ENCODE measurements at regions of chr11 and their contacts with region 1.

Region 1: DNA sequence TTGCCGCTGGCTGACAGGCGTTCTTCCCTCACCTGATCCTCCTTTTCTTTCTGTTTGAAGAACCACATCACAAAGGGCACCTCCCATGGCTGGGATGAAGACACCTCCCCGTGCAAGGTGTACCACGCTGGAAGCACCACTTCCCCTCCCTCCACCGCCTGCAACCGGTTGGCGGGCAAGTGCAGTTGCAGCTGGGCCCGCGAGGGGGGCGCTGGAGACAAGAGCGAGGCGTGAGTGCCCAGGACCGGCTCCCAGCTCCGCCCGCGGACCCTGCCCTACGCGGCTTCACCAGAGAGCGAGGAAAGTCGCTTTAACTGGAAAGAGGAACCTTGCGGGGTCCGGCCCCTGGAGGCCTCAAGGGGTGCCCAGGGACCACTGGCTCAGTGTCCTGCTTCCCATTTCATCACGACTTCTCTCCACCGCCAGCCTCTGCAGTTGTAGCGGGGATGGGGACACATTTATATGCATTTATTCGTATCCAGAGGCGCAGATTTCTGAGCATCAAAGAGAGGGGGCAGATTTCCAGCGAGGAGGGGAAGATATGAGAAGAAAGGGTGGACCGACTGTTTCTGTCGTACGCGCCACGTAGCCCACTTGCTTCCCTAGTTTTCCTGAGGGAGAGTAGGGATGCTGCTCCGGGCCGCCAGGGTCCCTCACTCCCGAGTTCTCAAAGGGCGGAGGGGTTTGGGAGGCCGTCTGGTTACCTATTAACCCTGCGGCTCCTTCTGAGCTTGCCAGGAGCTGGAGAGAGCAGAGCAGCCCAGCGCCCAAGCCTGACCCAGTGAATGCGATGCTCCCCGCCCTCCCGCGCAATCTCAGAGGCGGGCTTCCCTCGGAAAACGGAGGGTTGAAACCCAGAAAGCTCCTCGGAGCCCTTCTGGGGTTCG is 3.5 kb downstream of the ESAM start:
- DNase-seq: peak; percentile 62 to 74 (median 65)
- H3K4me3 ChIP-seq: no peak overlapping the region
- H3K4me3 Mint-ChIP-seq: peak overlapping the region; percentile 58 to 86 (median 72)
- H3K27ac ChIP-seq: no peak overlapping the region
- H3K27ac Mint-ChIP-seq: peak overlapping the region in 3 of 7 donors; percentile 18 to 43 (median 41)
- H3K4me1 ChIP-seq: peaks cover 33% of the 10 kb centered on the region
- H3K4me1 Mint-ChIP-seq: peaks cover 7 to 40% (median 22%) of the 10 kb centered on the region in 4 donors
- H3K27me3 ChIP-seq: peaks cover 34% of the 10 kb centered on the region
- H3K27me3 Mint-ChIP-seq: peaks cover 22 to 32% of the 10 kb centered on the region in 2 donors

Region 2: DNA sequence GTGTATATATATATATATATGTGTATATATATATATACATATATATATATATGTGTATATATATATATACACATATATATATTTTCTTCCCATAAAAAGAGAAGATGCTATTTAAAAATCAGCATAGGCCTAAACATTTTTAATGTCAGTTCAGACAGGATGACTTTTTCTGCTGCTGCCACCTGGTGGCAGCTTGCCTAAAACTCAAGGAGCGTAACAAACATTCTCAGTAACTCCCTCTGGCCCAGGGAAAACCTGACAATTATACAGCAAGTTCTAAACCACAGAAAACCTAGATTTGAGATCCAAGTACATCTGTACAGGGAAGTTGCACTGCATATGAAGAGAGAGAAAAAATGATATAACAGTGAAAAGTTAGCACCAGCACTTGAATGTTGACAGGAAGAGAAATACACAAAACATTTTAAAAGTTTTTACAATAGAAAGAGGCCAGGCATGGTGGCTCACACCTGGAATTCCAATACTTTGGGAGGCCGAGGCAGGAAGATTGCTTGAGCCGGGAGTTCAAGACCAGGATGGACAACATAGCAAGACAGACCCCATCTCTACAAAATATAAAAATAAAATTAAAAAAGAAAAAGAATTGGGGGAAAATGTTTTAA is 172.2 kb before region 1 on chr11:
- CTCF ChIA-PET with region 1: no interaction called
- POLR2A ChIA-PET with region 1: no interaction called
- intact Hi-C with region 1: no loop called
- DNase-seq: peak in 4 of 5 donors; percentile 8 to 22 (median 16)
- H3K4me3 ChIP-seq: no peak overlapping the region
- H3K4me3 Mint-ChIP-seq: no peak overlapping the region
- H3K27ac ChIP-seq: no peak overlapping the region
- H3K27ac Mint-ChIP-seq: no peak overlapping the region
- H3K4me1 ChIP-seq: no peaks in the 10 kb centered on the region
- H3K4me1 Mint-ChIP-seq: no peaks in the 10 kb centered on the region
- H3K27me3 ChIP-seq: no peaks in the 10 kb centered on the region
- H3K27me3 Mint-ChIP-seq: peaks cover 14 to 16% of the 10 kb centered on the region in 2 donors

Region 3: DNA sequence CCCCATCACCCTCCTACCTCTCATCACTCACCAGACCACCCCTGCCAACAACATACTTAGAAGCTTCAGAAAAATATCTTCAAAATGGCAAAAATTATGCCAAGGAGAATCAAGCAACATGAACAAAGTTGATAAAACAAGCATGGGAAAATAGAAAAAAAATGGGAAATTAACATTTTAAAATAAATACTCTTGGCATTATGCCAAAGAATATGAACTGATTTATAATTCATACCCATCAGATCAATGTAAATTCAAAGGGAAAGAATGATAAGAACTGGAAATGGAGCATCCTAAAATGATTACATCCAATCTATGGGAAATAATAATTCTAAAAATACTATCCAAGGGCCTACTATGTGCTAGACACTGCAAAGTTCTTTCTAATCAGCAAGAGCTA is 97.0 kb before region 1 on chr11:
- CTCF ChIA-PET with region 1: interaction called, 13 read pairs
- POLR2A ChIA-PET with region 1: no interaction called
- intact Hi-C with region 1: no loop called
- DNase-seq: no peak
- H3K4me3 ChIP-seq: no peak overlapping the region
- H3K4me3 Mint-ChIP-seq: no peak overlapping the region
- H3K27ac ChIP-seq: no peak overlapping the region
- H3K27ac Mint-ChIP-seq: no peak overlapping the region
- H3K4me1 ChIP-seq: no peaks in the 10 kb centered on the region
- H3K4me1 Mint-ChIP-seq: peaks cover 0 to 1% (median 0%) of the 10 kb centered on the region in 4 donors
- H3K27me3 ChIP-seq: no peaks in the 10 kb centered on the region
- H3K27me3 Mint-ChIP-seq: no peaks in the 10 kb centered on the region

Region 4: DNA sequence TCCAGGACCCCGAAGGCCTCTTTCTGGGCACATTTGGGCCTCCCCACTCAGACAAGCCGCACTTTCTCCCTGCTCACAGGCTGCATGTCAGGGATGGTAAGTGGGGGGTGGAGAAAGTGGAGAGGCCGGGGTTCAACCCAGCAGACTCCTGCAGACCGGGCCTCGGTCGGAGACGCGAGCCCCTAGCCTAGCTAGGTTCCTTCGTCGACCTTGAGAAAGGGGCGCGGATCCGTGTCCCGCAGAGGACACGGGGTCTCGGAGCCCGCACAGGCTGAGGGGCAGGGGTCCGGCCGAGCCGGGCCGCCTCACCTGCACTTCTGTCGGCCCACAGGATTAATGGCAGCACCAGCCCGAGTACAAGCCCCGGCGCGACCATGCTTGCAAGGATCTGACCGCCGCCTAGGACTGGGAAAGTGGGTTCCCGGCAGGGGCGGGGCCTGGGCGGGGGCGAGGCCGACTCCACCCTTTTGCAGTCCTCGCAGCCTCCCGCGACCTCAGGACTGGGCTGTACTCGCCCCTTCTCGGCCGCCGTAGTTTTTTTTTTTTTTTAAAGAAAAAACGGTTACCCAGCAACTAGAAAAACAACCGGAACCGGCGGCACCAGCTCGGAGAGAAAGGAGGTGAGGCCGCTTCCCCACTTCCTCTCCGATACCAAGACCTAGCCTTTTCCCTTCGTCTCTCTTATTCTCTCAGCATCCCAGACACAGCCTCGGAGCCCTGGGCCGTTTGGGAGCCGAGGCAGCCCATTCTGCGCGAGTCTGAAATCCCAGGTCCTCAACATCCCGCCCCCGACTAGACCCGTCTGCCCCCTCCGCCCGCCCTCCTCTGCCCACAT is 85.0 kb before region 1 on chr11 and contains the starts of genes SIAE and SPA17:
- CTCF ChIA-PET with region 1: interaction called, 224 read pairs
- POLR2A ChIA-PET with region 1: interaction called, 35 read pairs
- intact Hi-C with region 1: loop called (anchors 1 kb)
- DNase-seq: peak; percentile 84 to 91 (median 88)
- H3K4me3 ChIP-seq: peak within 1 kb of the TSS; percentile 39 to 73
- H3K4me3 Mint-ChIP-seq: peak within 1 kb of the TSS; percentile 90 to 95 (median 91)
- H3K27ac ChIP-seq: peak within 1 kb of the TSS; percentile 66
- H3K27ac Mint-ChIP-seq: peak within 1 kb of the TSS; percentile 98 to 99 (median 99)
- H3K4me1 ChIP-seq: peaks cover 42% of the 10 kb centered on the region
- H3K4me1 Mint-ChIP-seq: peaks cover 16 to 43% (median 32%) of the 10 kb centered on the region in 4 donors
- H3K27me3 ChIP-seq: peaks cover 5% of the 10 kb centered on the region
- H3K27me3 Mint-ChIP-seq: no peaks in the 10 kb centered on the region
- total RNA-seq, gene SIAE: 4.2 to 4.8 TPM
- total RNA-seq, gene SPA17: 0.55 to 0.81 TPM

Region 5: DNA sequence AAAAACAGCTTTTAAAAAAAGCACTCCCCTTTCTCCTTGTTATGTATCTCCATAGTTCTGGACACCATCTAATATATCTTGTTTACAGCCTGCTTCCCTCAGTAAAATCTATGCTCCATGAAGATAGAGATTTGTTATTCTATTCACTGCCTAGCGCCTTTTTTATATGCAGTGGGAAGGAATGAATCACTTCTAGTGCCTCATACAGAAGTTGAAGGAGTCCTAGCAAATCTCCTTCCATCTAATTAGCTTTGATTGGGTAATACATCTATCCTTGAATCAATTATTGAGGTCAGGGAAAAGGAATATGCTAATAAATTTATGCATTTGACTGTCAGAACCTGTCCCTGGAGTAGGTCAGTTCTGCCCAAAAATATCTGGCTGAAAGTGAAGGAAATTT is 59.0 kb before region 1 on chr11:
- CTCF ChIA-PET with region 1: no interaction called
- POLR2A ChIA-PET with region 1: no interaction called
- intact Hi-C with region 1: no loop called
- DNase-seq: no peak
- H3K4me3 ChIP-seq: no peak overlapping the region
- H3K4me3 Mint-ChIP-seq: no peak overlapping the region
- H3K27ac ChIP-seq: no peak overlapping the region
- H3K27ac Mint-ChIP-seq: no peak overlapping the region
- H3K4me1 ChIP-seq: no peaks in the 10 kb centered on the region
- H3K4me1 Mint-ChIP-seq: no peaks in the 10 kb centered on the region
- H3K27me3 ChIP-seq: no peaks in the 10 kb centered on the region
- H3K27me3 Mint-ChIP-seq: peaks cover 12 to 13% of the 10 kb centered on the region in 2 donors

Region 6: DNA sequence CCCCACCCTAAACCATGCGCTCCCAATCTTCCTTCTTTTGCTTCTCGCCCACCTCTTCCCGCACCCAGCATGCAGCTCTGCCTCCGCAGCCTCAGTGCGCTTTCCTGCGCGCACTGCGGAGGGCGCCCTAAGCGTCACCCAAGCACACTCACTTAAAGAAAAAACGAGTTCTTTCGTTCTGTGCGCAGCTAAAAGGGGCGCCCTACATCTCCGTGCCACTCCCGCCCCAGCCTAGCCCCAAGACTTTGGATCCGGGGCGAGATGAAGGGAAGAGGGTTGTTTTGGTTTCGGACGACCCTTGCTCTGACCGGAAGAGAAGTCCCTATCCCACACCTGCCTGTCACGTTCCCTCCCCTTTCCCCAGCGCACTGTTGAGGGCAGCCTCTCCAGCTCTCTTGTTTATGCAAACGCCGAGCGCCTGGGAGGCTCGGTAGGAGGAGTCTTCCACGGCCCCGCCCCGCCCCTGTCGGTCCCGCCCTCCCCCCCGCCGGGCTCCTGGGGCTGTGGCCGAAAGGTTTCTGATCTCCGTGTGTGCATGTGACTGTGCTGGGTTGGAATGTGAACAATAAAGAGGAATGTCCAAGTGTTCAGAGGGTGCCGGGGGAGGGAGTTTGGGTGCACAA is 11.8 kb before region 1 on chr11:
- CTCF ChIA-PET with region 1: interaction called, 239 read pairs
- POLR2A ChIA-PET with region 1: interaction called, 50 read pairs
- intact Hi-C with region 1: loop called (anchors 1 kb)
- DNase-seq: peak; percentile 80 to 86 (median 85)
- H3K4me3 ChIP-seq: peak overlapping the region; percentile 76 to 97
- H3K4me3 Mint-ChIP-seq: peak overlapping the region; percentile 96 to 99 (median 98)
- H3K27ac ChIP-seq: peak overlapping the region; percentile 58
- H3K27ac Mint-ChIP-seq: peak overlapping the region; percentile 83 to 98 (median 94)
- H3K4me1 ChIP-seq: peaks cover 6% of the 10 kb centered on the region
- H3K4me1 Mint-ChIP-seq: peaks cover 6 to 21% (median 9%) of the 10 kb centered on the region in 4 donors
- H3K27me3 ChIP-seq: no peaks in the 10 kb centered on the region
- H3K27me3 Mint-ChIP-seq: peaks cover 0 to 1% of the 10 kb centered on the region in 2 donors

Region 7: DNA sequence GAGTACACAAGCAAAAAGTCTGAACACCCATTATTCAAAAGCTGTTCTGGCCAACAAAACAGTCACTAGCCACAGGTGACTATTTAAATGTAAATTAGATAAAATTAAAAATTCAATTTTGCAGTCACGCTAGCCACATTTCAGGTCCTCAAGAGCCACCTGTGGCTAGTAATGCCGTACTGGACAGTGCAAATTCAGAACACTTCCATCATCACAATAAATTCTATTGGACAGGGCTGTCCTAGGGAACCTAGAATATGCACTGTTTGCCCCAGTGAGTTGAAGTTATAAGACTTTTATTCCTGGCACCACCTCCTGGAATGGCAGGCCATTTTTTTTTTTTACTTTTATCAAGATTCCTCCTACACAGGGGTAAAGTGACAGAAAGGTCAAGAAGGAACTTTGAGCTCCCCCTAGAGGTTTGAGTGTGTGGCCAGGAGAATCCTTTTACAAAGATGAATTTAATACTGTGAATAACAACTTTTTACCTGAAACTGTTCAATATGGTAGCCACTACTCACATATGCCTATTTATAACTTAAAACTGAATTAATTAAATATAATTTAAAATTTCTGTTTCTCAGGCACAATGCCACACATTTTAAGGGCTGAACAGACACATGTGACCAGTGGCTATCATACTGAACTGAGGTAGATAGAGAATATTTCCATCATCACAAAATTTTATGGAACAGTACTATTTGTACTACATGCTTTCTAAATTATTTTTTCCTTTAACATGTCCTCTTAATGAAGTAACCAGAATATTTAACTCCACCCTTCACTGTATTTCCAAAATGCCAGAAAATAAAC is 35.1 kb after region 1 on chr11:
- CTCF ChIA-PET with region 1: interaction called, 37 read pairs
- POLR2A ChIA-PET with region 1: interaction called, 24 read pairs
- intact Hi-C with region 1: no loop called
- DNase-seq: peak in 4 of 5 donors; percentile 30 to 46 (median 36)
- H3K4me3 ChIP-seq: no peak overlapping the region
- H3K4me3 Mint-ChIP-seq: no peak overlapping the region
- H3K27ac ChIP-seq: no peak overlapping the region
- H3K27ac Mint-ChIP-seq: no peak overlapping the region
- H3K4me1 ChIP-seq: peaks cover 12% of the 10 kb centered on the region
- H3K4me1 Mint-ChIP-seq: peaks cover 15 to 47% (median 26%) of the 10 kb centered on the region in 4 donors
- H3K27me3 ChIP-seq: no peaks in the 10 kb centered on the region
- H3K27me3 Mint-ChIP-seq: no peaks in the 10 kb centered on the region

Region 8: DNA sequence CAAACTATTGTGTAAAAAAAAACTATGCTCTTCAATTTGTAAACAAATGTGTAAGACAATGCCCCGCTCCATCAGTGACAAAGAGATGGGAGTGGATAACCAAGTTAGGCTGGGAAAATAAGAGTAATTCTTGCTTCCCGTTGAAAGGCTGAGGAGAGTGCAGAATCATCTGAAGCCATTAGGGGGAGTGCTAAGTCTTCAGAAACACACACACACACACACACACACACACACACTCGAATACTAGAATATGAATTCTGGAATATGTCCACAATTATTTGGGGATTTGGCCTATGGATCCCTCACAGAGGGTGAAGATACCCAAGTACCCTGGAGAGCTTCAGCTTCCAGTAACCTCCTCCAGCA is 78.9 kb after region 1 on chr11:
- CTCF ChIA-PET with region 1: interaction called, 23 read pairs
- POLR2A ChIA-PET with region 1: interaction called, 4 read pairs
- intact Hi-C with region 1: loop called (anchors 1 kb)
- DNase-seq: peak in 1 of 5 donors; percentile 10
- H3K4me3 ChIP-seq: no peak overlapping the region
- H3K4me3 Mint-ChIP-seq: peak overlapping the region in 1 of 8 donors; percentile 84
- H3K27ac ChIP-seq: no peak overlapping the region
- H3K27ac Mint-ChIP-seq: peak overlapping the region in 1 of 7 donors; percentile 74
- H3K4me1 ChIP-seq: peaks cover 10% of the 10 kb centered on the region
- H3K4me1 Mint-ChIP-seq: peaks cover 8 to 21% (median 14%) of the 10 kb centered on the region in 4 donors
- H3K27me3 ChIP-seq: peaks cover 41% of the 10 kb centered on the region
- H3K27me3 Mint-ChIP-seq: peaks cover 43 to 70% of the 10 kb centered on the region in 2 donors

Region 9: DNA sequence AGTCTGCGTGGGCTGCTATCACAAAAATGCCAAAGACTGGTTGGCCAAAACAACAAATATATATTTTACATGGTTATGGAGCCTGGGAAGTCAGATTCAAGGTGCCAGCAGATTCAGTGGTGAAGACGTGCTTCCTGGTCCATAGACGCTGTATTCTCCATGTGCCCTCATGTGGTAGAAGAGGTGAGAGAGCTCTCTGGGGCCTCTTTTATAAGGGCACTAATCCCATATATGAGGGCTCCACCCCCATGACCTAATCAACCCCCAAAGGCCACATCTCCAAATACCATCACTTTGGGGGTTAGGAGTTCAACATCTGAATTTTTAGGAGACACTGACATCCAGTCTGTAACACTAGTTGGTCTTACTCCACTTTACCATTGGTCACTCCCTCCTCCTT is 96.9 kb after region 1 on chr11:
- CTCF ChIA-PET with region 1: no interaction called
- POLR2A ChIA-PET with region 1: no interaction called
- intact Hi-C with region 1: no loop called
- DNase-seq: no peak
- H3K4me3 ChIP-seq: no peak overlapping the region
- H3K4me3 Mint-ChIP-seq: no peak overlapping the region
- H3K27ac ChIP-seq: no peak overlapping the region
- H3K27ac Mint-ChIP-seq: no peak overlapping the region
- H3K4me1 ChIP-seq: no peaks in the 10 kb centered on the region
- H3K4me1 Mint-ChIP-seq: no peaks in the 10 kb centered on the region
- H3K27me3 ChIP-seq: peaks cover 6% of the 10 kb centered on the region
- H3K27me3 Mint-ChIP-seq: peaks cover 5 to 18% of the 10 kb centered on the region in 2 donors